ENCODE measurements at regions of chr9 and their contacts with region 1.

Region 1: DNA sequence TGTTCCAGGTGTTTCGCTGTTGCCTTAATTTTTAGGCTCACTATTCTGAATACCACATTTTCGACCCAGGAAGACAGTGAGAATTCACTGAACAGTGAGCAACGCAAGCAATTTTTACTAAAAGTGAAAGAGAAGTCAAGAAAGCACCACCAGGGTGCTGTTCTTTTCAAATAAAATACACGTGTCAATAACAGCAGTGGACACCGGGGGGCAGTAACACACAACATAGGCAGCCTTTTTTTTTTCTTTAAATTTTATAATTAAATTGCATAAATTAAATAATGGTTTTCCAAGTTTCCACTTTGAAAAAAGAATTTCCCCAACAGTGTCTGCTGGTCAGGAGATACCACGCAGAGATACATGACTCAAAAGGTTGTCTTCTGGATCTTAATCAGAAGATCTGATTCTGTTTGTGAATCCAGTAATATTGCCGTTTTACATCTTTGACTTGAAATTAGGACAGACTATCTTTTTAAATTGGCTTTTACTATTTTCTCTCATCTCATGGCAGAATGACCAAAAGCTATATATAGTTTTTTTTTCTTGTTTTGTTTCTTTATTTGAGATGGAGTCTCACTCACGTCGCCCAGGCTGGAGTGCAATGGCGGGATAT is 47.1 kb upstream of the SH3GL2 start:
- DNase-seq: no peak
- H3K4me3 Mint-ChIP-seq: no peak overlapping the region
- H3K27ac Mint-ChIP-seq: no peak overlapping the region
- H3K4me1 Mint-ChIP-seq: no peaks in the 10 kb centered on the region
- H3K27me3 Mint-ChIP-seq: peaks cover 1% of the 10 kb centered on the region

Region 2: DNA sequence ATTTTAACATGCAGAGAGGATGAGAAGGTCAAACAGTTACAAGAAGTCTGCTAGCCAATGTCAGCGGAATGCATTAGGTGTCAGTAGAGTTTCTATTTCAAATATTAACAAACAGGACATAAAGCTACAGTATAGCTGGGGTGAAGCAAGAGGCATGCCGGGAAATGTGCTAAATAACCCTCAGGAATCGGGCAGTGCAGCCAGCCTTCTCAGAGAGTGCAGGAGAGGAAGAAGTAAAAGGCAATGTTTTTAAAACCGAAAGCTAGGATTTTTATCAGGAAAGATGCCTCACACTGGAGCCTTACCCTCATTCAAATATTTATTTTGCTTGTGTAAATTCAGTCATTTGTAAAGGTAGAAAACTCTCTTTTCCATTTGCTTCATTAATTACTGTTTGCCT is 12.0 kb before region 1 on chr9:
- intact Hi-C with region 1: no loop called
- DNase-seq: no peak
- H3K4me3 Mint-ChIP-seq: no peak overlapping the region
- H3K27ac Mint-ChIP-seq: no peak overlapping the region
- H3K4me1 Mint-ChIP-seq: no peaks in the 10 kb centered on the region
- H3K27me3 Mint-ChIP-seq: no peaks in the 10 kb centered on the region

Region 3: DNA sequence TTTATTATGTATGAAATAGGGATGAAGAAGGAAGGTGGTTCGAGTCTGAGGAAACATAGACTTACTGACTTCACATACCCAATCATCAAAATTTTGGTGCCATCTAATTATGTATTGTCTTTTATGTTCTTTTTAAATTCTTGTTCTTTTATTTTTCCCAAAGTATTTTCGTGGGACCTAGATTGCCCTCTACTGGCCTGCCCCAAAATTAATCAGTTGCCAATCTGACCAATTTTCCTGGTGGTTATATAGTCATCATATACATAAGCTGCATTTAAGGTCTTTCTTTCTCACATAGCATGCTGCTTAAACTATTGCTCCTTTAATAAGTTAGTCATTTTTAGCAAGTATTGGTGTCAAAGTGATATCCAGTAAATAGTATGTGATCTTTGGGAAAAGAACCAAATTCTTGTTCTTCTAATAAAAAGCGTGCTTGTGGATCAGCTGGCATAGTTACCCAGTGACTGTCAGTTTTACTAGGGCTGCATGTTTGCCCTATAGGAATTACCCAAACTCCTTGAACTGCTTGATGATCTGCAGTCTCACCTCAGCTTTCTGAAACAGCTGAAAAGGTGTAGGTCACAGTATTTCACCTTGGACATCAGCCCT is 270.6 kb after region 1 on chr9:
- intact Hi-C with region 1: loop called (anchors 10 kb)
- DNase-seq: no peak
- H3K4me3 Mint-ChIP-seq: no peak overlapping the region
- H3K27ac Mint-ChIP-seq: no peak overlapping the region
- H3K4me1 Mint-ChIP-seq: no peaks in the 10 kb centered on the region
- H3K27me3 Mint-ChIP-seq: no peaks in the 10 kb centered on the region